GM12878 (cell line): ENCODE measurements at regions of chr4 and their contacts with region 1.

Region 1: DNA sequence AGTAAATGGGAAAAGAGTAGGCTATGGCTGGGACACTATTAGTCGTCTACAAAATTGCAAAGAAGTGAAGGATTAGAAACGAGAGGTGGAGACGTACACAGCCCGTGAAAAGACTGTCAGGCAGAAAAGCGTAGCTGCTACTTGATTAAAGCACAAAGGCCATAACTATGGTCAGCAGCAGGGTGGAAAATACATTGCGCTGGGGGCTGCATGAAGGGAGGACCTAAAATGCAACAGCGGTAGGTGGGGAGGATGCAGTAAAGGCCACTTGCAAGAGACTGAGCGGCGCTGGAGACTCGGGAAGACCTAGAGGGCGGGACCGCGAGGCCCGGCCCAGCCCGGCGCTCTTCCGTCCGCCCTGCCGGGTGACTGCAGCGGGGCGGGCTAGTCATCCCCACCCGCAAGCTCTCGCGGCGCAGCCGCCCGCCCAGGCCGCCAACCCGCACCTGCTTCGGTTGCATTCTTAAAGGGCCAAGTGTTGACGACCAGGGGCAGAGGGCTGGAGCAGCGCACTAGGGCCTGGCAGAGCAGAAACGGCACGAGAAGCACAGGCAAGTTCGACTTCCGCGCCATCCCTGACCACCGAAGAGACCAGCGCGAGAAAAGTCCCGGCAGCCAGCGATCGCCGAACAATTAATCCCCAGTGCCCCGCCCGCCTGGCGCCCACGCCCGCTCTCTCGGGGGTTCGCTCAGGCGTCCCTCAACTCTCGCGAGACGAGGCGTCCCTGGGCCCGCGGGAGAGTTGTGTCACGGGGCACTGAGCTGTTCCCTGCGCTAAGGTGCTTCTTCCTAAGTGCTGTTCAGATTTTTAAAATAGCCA is at the start of gene AGA:
- DNase-seq: peak; percentile 74
- ATAC-seq: peak; percentile 95
- H3K4me3 ChIP-seq: peak within 1 kb of the TSS; percentile 85
- H3K27ac ChIP-seq: peak within 1 kb of the TSS; percentile 89
- H3K4me1 ChIP-seq: no peaks in the 10 kb centered on the region
- H3K27me3 ChIP-seq: no peaks in the 10 kb centered on the region
- CTCF ChIP-seq: no peak
- EP300 ChIP-seq: no peak
- POLR2A ChIP-seq: peak; percentile 97
- RAD21 ChIP-seq: no peak
- polyA plus RNA-seq, gene AGA: 27.4 to 37.6 TPM

Region 2: GRCh38 chr4:177309522-177310371 is 132.3 kb before region 1 on chr4 and contains the start of gene NEIL3:
- CTCF ChIA-PET with region 1: interaction called, 3 read pairs
- POLR2A ChIA-PET with region 1: interaction called, 10 read pairs
- RAD21 ChIA-PET with region 1: interaction called, 6 read pairs
- SMC1A ChIA-PET with region 1: interaction called, 5 read pairs
- in situ Hi-C with region 1: loop called (anchors 5 kb)
- intact Hi-C with region 1: loop called (anchors 5 kb)
- DNase-seq: peak; percentile 54
- ATAC-seq: peak; percentile 95
- H3K4me3 ChIP-seq: peak within 1 kb of the TSS; percentile 82
- H3K27ac ChIP-seq: peak within 1 kb of the TSS; percentile 58
- H3K4me1 ChIP-seq: no peaks in the 10 kb centered on the region
- H3K27me3 ChIP-seq: no peaks in the 10 kb centered on the region
- CTCF ChIP-seq: no peak
- EP300 ChIP-seq: no peak
- POLR2A ChIP-seq: peak; percentile 90
- RAD21 ChIP-seq: no peak
- polyA plus RNA-seq, gene NEIL3: 3.0 to 3.4 TPM

Region 3: GRCh38 chr4:177349188-177349587 is 92.8 kb before region 1 on chr4:
- CTCF ChIA-PET with region 1: no interaction called
- POLR2A ChIA-PET with region 1: interaction called, 10 read pairs
- RAD21 ChIA-PET with region 1: no interaction called
- SMC1A ChIA-PET with region 1: no interaction called
- in situ Hi-C with region 1: no loop called
- intact Hi-C with region 1: no loop called
- DNase-seq: no peak
- ATAC-seq: no peak
- H3K4me3 ChIP-seq: no peak overlapping the region
- H3K27ac ChIP-seq: no peak overlapping the region
- H3K4me1 ChIP-seq: no peaks in the 10 kb centered on the region
- H3K27me3 ChIP-seq: no peaks in the 10 kb centered on the region
- CTCF ChIP-seq: no peak
- EP300 ChIP-seq: no peak
- POLR2A ChIP-seq: no peak
- RAD21 ChIP-seq: no peak